ENCODE measurements at regions of chr11 and their contacts with region 1.

Region 1: GRCh38 chr11:10405855-10406592 is 49.0 kb upstream of the AMPD3 start:
- DNase-seq: peak in 8 of 9 donors; percentile 30 to 56 (median 46)
- ATAC-seq: peak; percentile 82
- H3K4me3 ChIP-seq: no peak overlapping the region
- H3K4me3 Mint-ChIP-seq: no peak overlapping the region
- H3K27ac ChIP-seq: no peak overlapping the region
- H3K27ac Mint-ChIP-seq: peak overlapping the region in 1 of 9 donors; percentile 50
- H3K4me1 ChIP-seq: peaks cover 4 to 12% of the 10 kb centered on the region in 2 donors
- H3K4me1 Mint-ChIP-seq: peaks cover 5 to 34% (median 27%) of the 10 kb centered on the region in 7 donors
- H3K27me3 ChIP-seq: no peaks in the 10 kb centered on the region
- H3K27me3 Mint-ChIP-seq: peaks cover 0 to 2% (median 0%) of the 10 kb centered on the region in 5 donors

Region 2: GRCh38 chr11:10377183-10377582 is 28.8 kb before region 1 on chr11:
- CTCF ChIA-PET with region 1: no interaction called
- POLR2A ChIA-PET with region 1: no interaction called
- intact Hi-C with region 1: loop called in 1 of 2 experiments (anchors 1 kb)
- DNase-seq: no peak
- ATAC-seq: no peak
- H3K4me3 ChIP-seq: no peak overlapping the region
- H3K4me3 Mint-ChIP-seq: no peak overlapping the region
- H3K27ac ChIP-seq: no peak overlapping the region
- H3K27ac Mint-ChIP-seq: no peak overlapping the region
- H3K4me1 ChIP-seq: no peaks in the 10 kb centered on the region
- H3K4me1 Mint-ChIP-seq: peaks cover 0 to 2% (median 0%) of the 10 kb centered on the region in 7 donors
- H3K27me3 ChIP-seq: no peaks in the 10 kb centered on the region
- H3K27me3 Mint-ChIP-seq: peaks cover 2 to 16% (median 12%) of the 10 kb centered on the region in 5 donors

Region 3: DNA sequence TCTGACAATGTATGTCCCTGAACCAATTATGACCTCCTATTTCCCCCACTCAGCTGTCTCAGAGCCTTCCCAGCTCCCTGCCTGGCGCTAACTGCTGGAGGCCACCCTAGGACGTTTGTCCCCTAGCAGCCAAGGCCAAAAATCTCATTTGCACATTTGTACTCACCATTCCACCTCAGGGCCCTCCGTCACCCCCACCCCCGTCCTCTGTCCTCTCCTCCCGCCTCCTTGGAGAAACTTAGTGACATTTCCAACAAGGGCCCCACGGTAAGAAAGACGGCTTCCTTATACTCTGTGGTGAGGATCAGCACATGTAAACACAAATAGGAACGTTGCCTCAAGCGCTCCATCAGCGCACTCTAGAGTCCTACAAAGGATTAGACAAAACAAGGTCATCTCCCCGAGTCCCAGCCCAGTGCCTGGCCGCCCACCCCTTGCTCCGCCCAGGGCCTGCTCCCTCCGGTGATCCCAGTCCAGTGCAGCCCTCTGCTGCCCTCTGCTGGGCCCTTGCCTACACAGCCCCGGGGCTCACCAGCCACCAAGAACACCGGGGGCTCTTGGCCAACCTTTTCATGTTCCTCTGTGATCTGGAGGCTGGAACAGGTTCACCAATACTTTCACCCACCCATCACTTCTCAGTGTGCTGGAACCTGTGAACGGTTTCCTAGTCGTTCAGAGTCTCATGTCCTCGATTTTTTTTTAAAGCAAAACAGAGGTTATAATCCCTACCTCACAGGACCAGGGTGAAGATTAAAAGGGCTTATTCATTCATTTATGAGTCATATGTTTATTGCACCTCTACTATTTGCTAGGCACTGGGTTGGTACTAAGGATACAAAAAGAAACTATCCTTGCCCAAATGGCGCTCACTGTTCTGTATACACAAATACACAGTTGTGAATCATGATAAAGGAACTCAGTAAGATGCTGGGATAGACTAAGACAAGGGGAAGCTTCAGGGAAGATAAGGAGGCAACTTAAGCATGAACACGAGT is 329.8 kb after region 1 on chr11:
- CTCF ChIA-PET with region 1: interaction called, 24 read pairs
- POLR2A ChIA-PET with region 1: interaction called, 3 read pairs
- intact Hi-C with region 1: loop called (anchors 1 kb)
- DNase-seq: peak; percentile 62 to 92 (median 77)
- ATAC-seq: peak; percentile 100
- H3K4me3 ChIP-seq: no peak overlapping the region
- H3K4me3 Mint-ChIP-seq: peak overlapping the region in 8 of 10 donors; percentile 8 to 75 (median 62)
- H3K27ac ChIP-seq: no peak overlapping the region
- H3K27ac Mint-ChIP-seq: peak overlapping the region in 5 of 9 donors; percentile 31 to 71 (median 59)
- H3K4me1 ChIP-seq: peaks cover 0 to 4% of the 10 kb centered on the region in 2 donors
- H3K4me1 Mint-ChIP-seq: peaks cover 5 to 13% (median 8%) of the 10 kb centered on the region in 7 donors
- H3K27me3 ChIP-seq: no peaks in the 10 kb centered on the region
- H3K27me3 Mint-ChIP-seq: peaks cover 4 to 19% (median 12%) of the 10 kb centered on the region in 5 donors

Measured in naive thymus-derived CD4-positive, alpha-beta T cell (primary cell).